ENCODE measurements at regions of chr15 and their contacts with region 1.

Region 1: DNA sequence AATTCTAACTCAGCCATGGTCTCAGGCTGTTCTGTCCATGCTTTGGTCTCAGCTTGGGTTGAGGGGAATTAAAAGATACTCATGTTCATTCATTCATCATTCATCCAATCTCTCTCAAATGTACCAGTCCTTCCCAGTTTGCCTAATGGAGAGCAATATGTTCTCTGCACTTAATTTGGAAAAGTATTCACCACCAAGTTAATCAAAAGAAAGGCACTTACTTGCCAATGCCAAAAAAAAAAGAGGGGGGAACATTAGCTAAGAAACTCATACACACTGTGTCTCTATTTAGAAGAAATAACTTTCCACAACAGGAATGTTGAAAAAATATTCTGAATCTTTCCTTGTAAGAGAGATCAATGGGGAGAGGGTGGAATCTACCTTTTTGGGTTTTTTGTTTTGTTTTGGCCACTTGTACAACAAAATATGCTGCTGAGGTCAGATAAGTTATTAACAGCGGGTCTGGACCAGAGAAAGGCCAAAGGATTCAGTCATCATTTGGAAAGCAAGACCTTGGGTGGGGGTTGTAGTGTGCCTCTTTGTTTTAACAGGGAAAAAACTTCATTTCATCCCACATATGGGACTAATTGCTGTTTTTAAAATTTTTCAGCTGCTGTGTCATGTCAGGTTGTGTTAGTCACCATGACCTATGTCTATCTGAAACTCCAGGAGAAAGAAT is 152.3 kb downstream of the FBN1 start:
- DNase-seq: no peak
- ATAC-seq: no peak
- H3K4me3 ChIP-seq: no peak overlapping the region
- H3K27ac ChIP-seq: no peak overlapping the region
- H3K4me1 ChIP-seq: no peaks in the 10 kb centered on the region; the same call in 1 of the 2 replicates
- H3K27me3 ChIP-seq: no peaks in the 10 kb centered on the region
- CTCF ChIP-seq: no peak
- EP300 ChIP-seq: no peak
- POLR2A ChIP-seq: no peak
- RAD21 ChIP-seq: no peak

Region 2: GRCh38 chr15:48507416-48508065 is 14.3 kb after region 1 on chr15:
- CTCF ChIA-PET with region 1: interaction called, 14 read pairs
- POLR2A ChIA-PET with region 1: no interaction called
- RAD21 ChIA-PET with region 1: no interaction called
- SMC1A ChIA-PET with region 1: interaction called, 3 read pairs
- in situ Hi-C with region 1: no loop called
- intact Hi-C with region 1: no loop called
- DNase-seq: peak; percentile 8
- ATAC-seq: peak; percentile 96
- H3K4me3 ChIP-seq: no peak overlapping the region
- H3K27ac ChIP-seq: no peak overlapping the region
- H3K4me1 ChIP-seq: no peaks in the 10 kb centered on the region
- H3K27me3 ChIP-seq: no peaks in the 10 kb centered on the region
- CTCF ChIP-seq: peak; percentile 61 to 87 (median 79)
- EP300 ChIP-seq: no peak
- POLR2A ChIP-seq: no peak
- RAD21 ChIP-seq: peak; percentile 51

Measured in GM12878 (cell line).